ENCODE measurements at regions of chr2 and their contacts with region 1.

Region 1: GRCh38 chr2:9318461-9319337 is 104.6 kb downstream of the ITGB1BP1 start:
- H3K4me3 ChIP-seq: no peak overlapping the region
- H3K27ac ChIP-seq: no peak overlapping the region
- H3K4me1 ChIP-seq: peaks cover 3% of the 10 kb centered on the region; the same call in 1 of the 2 replicates
- CTCF ChIP-seq: no peak

Region 2: DNA sequence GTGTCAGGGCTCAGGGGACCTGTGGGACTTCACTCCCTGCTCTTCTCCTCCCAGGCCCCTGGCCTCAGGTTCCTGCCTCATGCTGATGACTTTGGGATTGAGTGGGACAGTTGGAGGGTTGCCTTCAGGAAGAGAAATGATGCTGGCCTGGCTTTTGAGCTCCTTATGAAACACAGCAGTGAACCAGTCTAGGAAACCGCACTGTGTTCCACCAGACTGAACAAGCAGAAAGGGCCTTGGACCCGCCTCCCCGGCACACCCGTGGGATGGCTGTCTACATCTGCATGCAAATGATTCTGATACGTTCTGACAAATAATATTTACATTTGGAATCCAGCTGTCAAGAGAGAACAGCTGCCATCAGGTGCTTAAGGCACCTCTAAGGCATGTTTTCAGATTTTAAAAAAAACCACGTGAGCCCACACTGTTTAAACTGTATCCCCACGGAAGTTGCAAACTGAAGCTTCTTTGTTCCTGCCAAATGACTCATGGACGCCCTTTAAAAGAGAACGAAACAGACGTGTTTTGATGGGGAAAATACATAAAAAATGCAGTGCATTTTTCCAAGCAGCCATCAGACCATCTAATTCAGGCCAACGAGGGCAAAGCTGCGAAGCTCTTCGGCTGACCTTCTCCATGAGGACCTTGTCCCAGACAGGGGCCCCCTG is 139.7 kb before region 1 on chr2:
- CTCF ChIA-PET with region 1: no interaction called
- POLR2A ChIA-PET with region 1: no interaction called
- H3K4me3 ChIP-seq: no peak overlapping the region
- H3K27ac ChIP-seq: no peak overlapping the region
- H3K4me1 ChIP-seq: peaks cover 6% of the 10 kb centered on the region; the same call in 1 of the 2 replicates
- CTCF ChIP-seq: no peak

Region 3: GRCh38 chr2:9333591-9334171 is 15.0 kb after region 1 on chr2:
- CTCF ChIA-PET with region 1: interaction called, 10 read pairs
- POLR2A ChIA-PET with region 1: no interaction called
- H3K4me3 ChIP-seq: no peak overlapping the region
- H3K27ac ChIP-seq: no peak overlapping the region
- H3K4me1 ChIP-seq: peaks cover 11% of the 10 kb centered on the region
- CTCF ChIP-seq: peak; percentile 53